ENCODE measurements at regions of chr10 and their contacts with region 1.

Region 1: GRCh38 chr10:75210282-75211006 is at the start of gene VDAC2:
- DNase-seq: peak; percentile 79
- ATAC-seq: peak; percentile 94
- H3K4me3 ChIP-seq: peak within 1 kb of the TSS; percentile 71
- H3K27ac ChIP-seq: peak within 1 kb of the TSS; percentile 100
- H3K4me1 ChIP-seq: peaks cover 12% of the 10 kb centered on the region
- H3K27me3 ChIP-seq: no peaks in the 10 kb centered on the region
- CTCF ChIP-seq: no peak
- POLR2A ChIP-seq: peak; percentile 87
- RAD21 ChIP-seq: no peak
- total RNA-seq, gene VDAC2: 122 and 169 TPM in 2 replicates

Region 2: GRCh38 chr10:75111367-75111906 is 99.0 kb before region 1 on chr10 and contains the start of gene SAMD8:
- CTCF ChIA-PET with region 1: no interaction called
- POLR2A ChIA-PET with region 1: interaction called, 5 read pairs
- dilution Hi-C with region 1: no loop called
- in situ Hi-C with region 1: no loop called
- intact Hi-C with region 1: loop called (anchors 5 kb)
- DNase-seq: peak; percentile 95
- ATAC-seq: peak; percentile 91
- H3K4me3 ChIP-seq: peak within 1 kb of the TSS; percentile 98
- H3K27ac ChIP-seq: peak within 1 kb of the TSS; percentile 96
- H3K4me1 ChIP-seq: peaks cover 2% of the 10 kb centered on the region; the same call in 1 of the 2 replicates
- H3K27me3 ChIP-seq: no peaks in the 10 kb centered on the region
- CTCF ChIP-seq: no peak
- POLR2A ChIP-seq: peak; percentile 90
- RAD21 ChIP-seq: no peak
- total RNA-seq, gene SAMD8: 28.7 and 34.2 TPM in 2 replicates

Region 3: DNA sequence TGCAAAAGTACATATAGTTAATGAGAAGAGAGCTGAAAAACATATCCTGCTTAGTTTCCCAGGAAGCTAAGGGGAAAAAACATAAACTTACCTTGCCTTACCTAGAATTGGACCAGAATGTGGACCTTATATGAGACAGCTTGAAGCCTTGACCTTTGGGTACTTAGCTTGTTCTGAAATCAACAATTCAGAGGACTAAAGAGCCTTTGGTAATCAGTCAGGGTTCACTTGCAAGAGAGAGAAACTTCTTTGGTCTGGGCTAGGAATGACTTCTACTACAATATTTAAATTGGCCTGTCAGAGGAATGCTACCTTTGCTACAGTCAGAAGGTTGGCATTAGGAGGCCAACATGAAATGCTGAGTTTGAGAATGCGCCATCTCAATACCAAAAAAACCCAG is 74.1 kb before region 1 on chr10:
- CTCF ChIA-PET with region 1: no interaction called
- POLR2A ChIA-PET with region 1: interaction called, 18 read pairs
- dilution Hi-C with region 1: no loop called
- in situ Hi-C with region 1: no loop called
- intact Hi-C with region 1: no loop called
- DNase-seq: no peak
- ATAC-seq: peak; percentile 22
- H3K4me3 ChIP-seq: no peak overlapping the region
- H3K27ac ChIP-seq: no peak overlapping the region
- H3K4me1 ChIP-seq: peaks cover 6% of the 10 kb centered on the region; the same call in 1 of the 2 replicates
- H3K27me3 ChIP-seq: no peaks in the 10 kb centered on the region
- CTCF ChIP-seq: no peak
- POLR2A ChIP-seq: no peak
- RAD21 ChIP-seq: no peak

Region 4: DNA sequence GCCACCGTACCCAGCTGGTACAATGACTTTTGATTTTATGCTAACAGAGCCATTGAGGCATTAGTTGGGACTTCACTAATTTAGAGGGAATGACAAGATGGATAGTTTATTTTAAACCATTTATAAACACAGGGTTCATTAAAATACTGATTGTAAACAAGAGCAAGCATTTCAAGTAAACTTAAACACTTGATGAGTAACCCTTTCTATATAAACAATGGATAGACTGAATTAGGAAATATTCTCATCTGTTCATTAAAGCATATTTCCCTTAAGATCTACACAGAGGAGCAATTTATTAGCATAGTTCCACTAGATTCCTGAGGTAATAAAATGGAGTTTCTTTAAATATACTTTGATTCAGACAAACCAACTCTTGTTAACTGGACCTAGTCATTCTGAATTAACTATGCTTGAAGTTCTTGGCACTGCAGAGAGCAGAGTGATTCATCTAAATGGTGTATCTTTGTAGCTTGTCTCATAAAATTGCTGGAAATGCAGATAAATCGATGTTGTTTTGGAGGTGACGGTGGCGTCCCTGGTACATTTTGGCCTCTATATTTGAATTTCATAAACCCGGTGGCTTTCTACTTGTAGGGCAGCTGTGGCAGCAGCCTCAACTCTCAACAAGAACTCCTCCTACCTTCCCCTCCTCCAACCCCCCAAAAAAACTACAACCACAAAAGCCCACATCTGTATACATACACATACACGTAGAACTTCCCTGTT is 15.2 kb before region 1 on chr10:
- CTCF ChIA-PET with region 1: no interaction called
- POLR2A ChIA-PET with region 1: interaction called, 5 read pairs
- dilution Hi-C with region 1: no loop called
- in situ Hi-C with region 1: no loop called
- intact Hi-C with region 1: loop called (anchors 1 kb)
- DNase-seq: peak; percentile 93
- ATAC-seq: peak; percentile 76
- H3K4me3 ChIP-seq: no peak overlapping the region
- H3K27ac ChIP-seq: peak overlapping the region; percentile 99
- H3K4me1 ChIP-seq: peaks cover 18% of the 10 kb centered on the region
- H3K27me3 ChIP-seq: no peaks in the 10 kb centered on the region
- CTCF ChIP-seq: no peak
- POLR2A ChIP-seq: no peak
- RAD21 ChIP-seq: no peak